ENCODE measurements at regions of chr11 and their contacts with region 1.

Region 1: GRCh38 chr11:75561426-75562047 is 516 bp upstream of the SERPINH1 start:
- DNase-seq: no peak
- H3K4me3 ChIP-seq: peak overlapping the region; percentile 66 to 99 (median 92)
- H3K27ac ChIP-seq: peak overlapping the region; percentile 99
- H3K4me1 ChIP-seq: peaks cover 26 to 45% of the 10 kb centered on the region in 2 donors
- H3K27me3 ChIP-seq: no peaks in the 10 kb centered on the region
- CTCF ChIP-seq: no peak
- POLR2A ChIP-seq: no peak

Region 2: DNA sequence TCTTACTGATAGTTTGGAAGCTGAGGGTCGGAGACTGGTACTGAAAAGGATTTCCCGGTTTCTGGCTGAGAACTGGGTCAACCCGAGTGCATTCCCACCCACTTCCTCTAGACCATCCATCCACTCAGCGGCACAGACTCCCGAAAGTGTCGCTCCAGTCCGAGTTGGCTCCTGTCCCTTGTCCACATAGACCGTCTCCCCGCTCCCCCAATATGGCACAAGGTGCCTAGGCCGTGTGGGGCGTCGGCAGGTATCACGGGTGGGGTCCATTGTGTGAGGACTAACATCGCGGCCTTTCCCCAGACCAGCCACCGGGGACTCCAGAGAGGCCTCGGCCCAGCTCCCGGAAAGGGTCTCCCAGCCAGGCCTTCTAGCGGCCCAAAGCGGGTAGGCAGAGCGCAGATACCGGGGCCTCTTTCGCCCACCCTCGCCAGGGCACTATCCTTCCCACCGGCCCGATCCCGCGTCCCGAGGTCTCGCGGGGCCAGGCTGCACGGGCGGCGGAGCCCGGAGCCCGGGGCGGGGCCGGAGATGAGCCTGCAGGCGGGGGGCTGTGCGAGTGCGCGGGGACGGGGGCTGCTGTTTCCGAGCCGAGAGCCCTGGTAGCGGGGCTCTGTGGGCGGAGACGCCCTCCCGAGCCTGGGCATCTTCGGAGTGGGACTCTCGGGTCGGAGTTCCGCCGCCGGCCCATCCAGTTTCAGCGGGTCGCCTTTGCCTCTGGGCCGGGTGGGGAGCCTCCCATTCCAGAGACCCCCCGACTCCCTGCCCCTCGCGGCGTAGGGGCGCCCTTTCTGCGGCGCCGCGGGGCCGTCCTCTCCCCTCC is 21.6 kb after region 1 on chr11:
- intact Hi-C with region 1: loop called (anchors 1 kb)
- DNase-seq: peak; percentile 39 to 62
- H3K4me3 ChIP-seq: peak overlapping the region; percentile 60 to 83 (median 66)
- H3K27ac ChIP-seq: peak overlapping the region; percentile 92 to 97
- H3K4me1 ChIP-seq: no peaks in the 10 kb centered on the region
- H3K27me3 ChIP-seq: no peaks in the 10 kb centered on the region
- CTCF ChIP-seq: peak in 2 of 3 donors; percentile 54 to 61
- POLR2A ChIP-seq: peak; percentile 24

Measured in breast epithelium (tissue), 4 donors.